Activated CD4-positive, alpha-beta T cell treated with anti-CD3 and anti-CD28 coated beads for 36 hours (primary cell): ENCODE measurements at regions of chr5 and their contacts with region 1.

Region 1: DNA sequence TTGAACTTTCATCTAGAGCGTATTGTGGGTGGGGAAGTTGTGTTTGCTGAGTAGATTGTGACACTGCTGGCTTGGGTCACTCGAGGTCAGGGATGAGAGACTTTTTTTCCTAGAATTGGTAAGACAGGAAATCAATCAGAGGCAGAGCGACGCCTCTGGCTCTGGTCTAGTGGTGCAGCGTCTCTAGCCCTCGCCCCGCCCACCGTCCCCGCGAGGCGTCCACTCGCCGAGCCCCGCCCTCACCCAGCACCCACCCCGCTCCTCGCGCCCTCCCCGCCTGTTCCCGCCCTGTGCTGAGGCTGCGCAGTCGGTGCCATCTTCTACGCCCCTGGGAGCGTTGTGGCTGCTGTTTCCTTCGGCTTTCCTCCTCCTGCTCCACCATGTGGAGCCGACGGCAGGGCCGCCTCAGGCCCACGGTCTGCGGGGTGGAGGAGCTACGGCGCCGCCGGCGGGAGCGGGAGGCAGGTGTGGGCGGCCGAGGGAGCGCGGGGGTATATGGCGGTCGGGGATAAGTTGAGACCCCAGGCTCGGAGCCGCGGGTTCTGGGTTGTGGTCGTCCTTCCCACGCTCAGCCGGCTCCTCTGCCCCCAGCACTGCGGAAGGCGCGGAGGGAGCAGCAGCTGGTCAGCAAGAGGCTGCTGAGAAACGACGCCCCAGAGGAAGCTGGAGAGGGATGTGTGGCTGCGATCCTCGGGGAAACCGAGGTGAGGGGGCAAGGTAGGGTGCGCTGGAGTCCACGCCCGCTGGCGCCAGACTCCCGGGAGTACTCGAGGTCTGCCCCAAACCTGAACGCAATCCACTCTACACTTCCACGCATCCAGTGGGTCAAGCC is at the start of gene TMCO6:
- DNase-seq: peak; percentile 99
- ATAC-seq: peak; percentile 94
- H3K4me3 Mint-ChIP-seq: peak within 1 kb of the TSS; percentile 93
- H3K27ac Mint-ChIP-seq: peak within 1 kb of the TSS; percentile 95
- H3K4me1 Mint-ChIP-seq: peaks cover 39% of the 10 kb centered on the region
- H3K27me3 Mint-ChIP-seq: no peaks in the 10 kb centered on the region
- total RNA-seq, gene TMCO6: 36.5 to 36.6 TPM

Region 2: GRCh38 chr5:140113699-140114263 is 525.6 kb before region 1 on chr5 and contains the start of gene PURA:
- CTCF ChIA-PET with region 1: no interaction called
- POLR2A ChIA-PET with region 1: no interaction called
- intact Hi-C with region 1: loop called in 1 of 2 experiments (anchors 1 kb)
- DNase-seq: peak; percentile 98
- ATAC-seq: peak; percentile 92
- H3K4me3 Mint-ChIP-seq: peak within 1 kb of the TSS; percentile 89
- H3K27ac Mint-ChIP-seq: peak within 1 kb of the TSS; percentile 84
- H3K4me1 Mint-ChIP-seq: peaks cover 65% of the 10 kb centered on the region
- H3K27me3 Mint-ChIP-seq: peaks cover 3% of the 10 kb centered on the region
- total RNA-seq, gene PURA: 9.5 to 10.7 TPM

Region 3: DNA sequence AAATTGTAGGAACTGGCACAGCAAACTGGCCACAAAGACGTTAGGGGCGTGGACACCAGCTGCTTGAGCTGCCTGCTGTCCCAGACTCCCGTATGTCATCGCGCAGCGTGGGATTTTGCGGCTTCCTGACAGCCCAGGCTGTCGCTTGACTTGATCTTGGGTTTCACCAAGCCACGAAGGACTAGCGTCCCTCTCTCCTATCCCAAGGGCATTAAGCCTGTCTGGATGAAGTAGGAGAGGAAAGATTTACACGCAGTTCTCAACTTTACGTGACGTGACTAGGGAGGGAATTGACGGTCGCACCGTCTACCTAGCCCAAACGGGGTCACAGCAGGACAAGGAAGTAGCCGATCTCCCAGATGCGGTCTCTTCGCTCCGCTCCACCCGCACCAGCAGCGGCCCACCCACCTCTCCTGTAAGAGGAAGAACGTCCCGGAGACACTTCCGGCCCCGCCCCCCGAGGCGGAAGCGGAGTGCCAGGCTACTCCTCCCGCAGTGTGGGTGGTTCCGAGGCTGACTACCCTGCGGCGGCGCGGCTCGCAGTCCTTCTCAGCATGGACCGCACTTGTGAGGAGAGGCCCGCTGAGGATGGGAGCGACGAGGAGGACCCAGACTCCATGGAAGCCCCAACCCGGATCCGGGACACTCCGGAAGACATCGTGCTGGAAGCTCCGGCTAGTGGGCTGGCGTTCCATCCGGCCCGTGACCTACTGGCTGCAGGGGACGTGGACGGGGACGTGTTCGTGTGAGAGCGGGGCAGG is 25.2 kb after region 1 on chr5 and contains the start of gene WDR55:
- CTCF ChIA-PET with region 1: interaction called, 5 read pairs
- POLR2A ChIA-PET with region 1: interaction called, 3 read pairs
- intact Hi-C with region 1: loop called (anchors 1 kb)
- DNase-seq: peak; percentile 97
- ATAC-seq: peak; percentile 96
- H3K4me3 Mint-ChIP-seq: peak within 1 kb of the TSS; percentile 98
- H3K27ac Mint-ChIP-seq: peak within 1 kb of the TSS; percentile 96
- H3K4me1 Mint-ChIP-seq: peaks cover 28% of the 10 kb centered on the region
- H3K27me3 Mint-ChIP-seq: no peaks in the 10 kb centered on the region
- total RNA-seq, gene WDR55: 25.9 to 31.7 TPM

Region 4: DNA sequence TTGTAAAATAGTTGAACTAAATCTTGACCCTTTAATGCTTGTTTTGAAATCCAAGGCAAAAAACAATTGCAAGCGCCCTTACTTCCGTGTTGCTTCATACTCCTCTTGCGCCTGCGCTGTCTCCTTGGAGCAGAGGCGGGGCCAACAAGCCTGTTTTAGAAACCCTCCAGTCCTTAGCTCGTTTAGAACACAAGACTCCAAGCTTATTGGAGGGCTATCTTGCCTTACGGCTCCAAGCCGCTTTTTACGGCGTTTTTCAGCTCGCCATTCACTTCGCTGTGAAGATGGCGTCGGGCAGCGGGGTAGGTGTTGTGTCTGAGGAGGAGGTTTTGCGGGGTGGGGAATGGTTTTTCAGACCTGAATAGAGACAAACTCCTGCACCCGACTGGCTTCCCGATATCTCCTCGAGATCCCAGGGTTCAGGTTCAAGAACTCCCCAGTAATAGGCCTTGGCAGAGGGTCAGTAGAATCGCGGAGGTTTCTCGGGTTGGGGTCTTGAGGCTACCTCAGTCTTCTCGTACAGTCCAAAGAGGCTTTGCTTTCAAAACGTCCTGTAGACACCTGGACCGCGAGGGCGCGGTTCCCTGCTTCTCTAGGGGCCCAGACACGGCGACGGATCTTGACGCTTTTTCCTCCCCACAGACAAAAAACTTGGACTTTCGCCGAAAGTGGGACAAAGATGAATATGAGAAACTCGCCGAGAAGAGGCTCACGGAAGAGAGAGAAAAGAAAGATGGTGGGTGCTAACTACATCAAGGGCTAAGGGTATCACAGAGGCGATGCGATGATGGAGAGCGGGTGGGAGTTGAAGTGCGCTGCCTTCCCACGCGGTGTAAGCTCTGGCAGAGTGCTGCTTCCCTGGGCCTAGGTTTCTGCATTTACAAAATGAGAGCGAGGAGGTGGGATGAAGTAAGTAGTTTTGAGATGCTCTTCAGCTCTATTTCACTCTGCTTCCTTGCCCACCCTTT is 61.1 kb after region 1 on chr5 and contains the start of gene ZMAT2:
- CTCF ChIA-PET with region 1: interaction called, 5 read pairs
- POLR2A ChIA-PET with region 1: no interaction called
- intact Hi-C with region 1: loop called in 1 of 2 experiments (anchors 1 kb)
- DNase-seq: peak; percentile 96
- ATAC-seq: peak; percentile 100
- H3K4me3 Mint-ChIP-seq: peak within 1 kb of the TSS; percentile 94
- H3K27ac Mint-ChIP-seq: peak within 1 kb of the TSS; percentile 94
- H3K4me1 Mint-ChIP-seq: peaks cover 24% of the 10 kb centered on the region
- H3K27me3 Mint-ChIP-seq: no peaks in the 10 kb centered on the region
- total RNA-seq, gene ZMAT2: 49.9 to 55.3 TPM